Esophagus muscularis mucosa (tissue), 4 donors: ENCODE measurements at regions of chr18 and their contacts with region 1.

Region 1: GRCh38 chr18:44409515-44409914 is 271.2 kb upstream of the SETBP1 start:
- DNase-seq: no peak
- H3K4me3 ChIP-seq: no peak overlapping the region
- H3K27ac ChIP-seq: no peak overlapping the region
- H3K4me1 ChIP-seq: peaks cover 2 to 19% (median 13%) of the 10 kb centered on the region in 4 donors
- H3K27me3 ChIP-seq: no peaks in the 10 kb centered on the region
- CTCF ChIP-seq: no peak
- EP300 ChIP-seq: no peak
- POLR2A ChIP-seq: no peak

Region 2: DNA sequence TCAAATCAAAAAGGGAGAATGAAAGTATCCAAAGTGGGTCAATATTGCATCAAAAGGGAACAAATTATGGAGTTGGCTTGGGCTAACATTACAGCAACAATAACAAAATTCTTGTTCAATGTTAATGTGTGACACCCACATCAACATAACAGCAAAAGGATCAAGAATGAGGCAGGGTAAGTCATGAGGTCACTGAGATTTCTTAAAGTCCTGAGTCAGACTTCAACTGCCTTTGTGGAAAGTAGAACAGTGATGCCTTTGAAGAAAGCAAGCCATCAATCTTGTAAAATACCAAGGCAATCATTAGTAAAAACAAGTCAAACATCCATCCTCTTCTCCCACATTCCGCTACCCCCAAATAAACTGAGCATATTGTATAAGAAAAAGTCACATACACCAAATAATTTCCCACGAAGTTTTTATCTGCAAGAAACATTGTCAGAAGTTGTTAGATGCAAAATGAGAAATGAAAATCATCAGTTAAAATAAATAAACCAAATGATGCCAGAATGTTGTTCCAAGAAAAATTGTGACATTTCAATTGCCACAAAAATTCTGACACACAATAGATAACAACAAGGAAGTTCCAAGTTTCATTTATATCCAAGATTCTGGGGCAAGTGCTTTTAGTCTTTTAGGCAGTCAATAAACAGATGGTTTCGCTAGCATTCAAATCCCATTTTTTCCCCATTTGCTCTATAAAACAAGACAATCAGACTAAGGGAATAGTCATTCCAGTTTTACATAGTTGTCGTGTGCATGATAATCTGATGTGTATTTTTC is 55.1 kb after region 1 on chr18:
- intact Hi-C with region 1: loop called (anchors 10 kb)
- DNase-seq: no peak
- H3K4me3 ChIP-seq: no peak overlapping the region
- H3K27ac ChIP-seq: peak overlapping the region in 2 of 4 donors; percentile 2 to 11
- H3K4me1 ChIP-seq: peaks cover 0 to 30% (median 23%) of the 10 kb centered on the region in 4 donors
- H3K27me3 ChIP-seq: no peaks in the 10 kb centered on the region
- CTCF ChIP-seq: no peak
- EP300 ChIP-seq: no peak
- POLR2A ChIP-seq: no peak